ENCODE measurements at regions of chr20 and their contacts with region 1.

Region 1: GRCh38 chr20:52379723-52380336 is 188.3 kb upstream of the ZFP64 start:
- DNase-seq: peak; percentile 42
- ATAC-seq: no peak
- H3K4me3 Mint-ChIP-seq: no peak overlapping the region
- H3K27ac Mint-ChIP-seq: no peak overlapping the region
- H3K4me1 Mint-ChIP-seq: peaks cover 7% of the 10 kb centered on the region
- H3K27me3 Mint-ChIP-seq: no peaks in the 10 kb centered on the region
- CTCF ChIP-seq: peak; percentile 99

Region 2: DNA sequence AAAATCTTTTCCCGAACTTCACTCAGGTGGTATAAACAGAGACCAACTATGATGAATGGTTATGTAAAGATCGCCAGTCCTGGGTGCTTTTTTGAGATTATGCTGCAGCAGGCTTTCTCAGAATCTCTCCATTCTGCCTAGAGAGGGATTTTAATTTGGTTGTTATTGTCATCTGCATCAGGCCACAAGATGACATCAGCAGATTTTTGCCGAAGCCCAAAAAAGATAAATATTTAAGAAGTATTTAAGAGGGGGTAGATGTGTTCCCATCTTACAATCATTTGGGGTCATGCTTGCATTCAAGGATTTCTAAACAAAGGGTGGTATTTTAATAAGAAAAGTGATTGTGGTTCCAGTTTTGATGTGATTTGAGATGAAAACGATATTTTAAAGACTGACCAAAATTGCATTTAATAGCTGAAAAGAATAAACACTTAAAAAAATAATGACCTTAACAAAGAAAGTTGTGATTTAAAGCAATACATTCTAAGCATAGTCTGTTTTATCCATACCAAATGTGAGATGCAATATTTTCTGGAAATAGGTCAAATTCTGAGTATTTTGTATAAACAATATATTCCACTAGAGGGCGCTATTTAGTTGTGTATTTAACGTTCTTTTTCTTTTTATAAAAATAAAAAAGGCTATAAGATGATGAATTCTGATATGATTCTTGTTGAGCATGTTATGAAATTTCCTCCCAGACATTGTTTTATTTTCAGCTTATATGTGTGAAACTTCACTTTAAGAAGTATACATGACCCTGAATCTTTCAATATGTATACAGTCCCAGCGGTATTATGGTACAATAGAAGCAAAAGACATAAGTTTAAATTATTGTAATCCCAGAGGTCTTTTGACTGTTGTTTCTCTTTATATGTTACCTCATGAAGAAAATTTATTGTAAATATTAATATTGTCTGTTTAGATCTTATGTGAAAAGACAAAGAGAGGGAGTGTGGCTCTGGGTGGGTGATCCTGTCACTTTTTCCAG is 137.3 kb before region 1 on chr20:
- CTCF ChIA-PET with region 1: interaction called, 3 read pairs
- POLR2A ChIA-PET with region 1: no interaction called
- intact Hi-C with region 1: loop called (anchors 10 kb)
- DNase-seq: no peak
- ATAC-seq: no peak
- H3K4me3 Mint-ChIP-seq: no peak overlapping the region
- H3K27ac Mint-ChIP-seq: no peak overlapping the region
- H3K4me1 Mint-ChIP-seq: no peaks in the 10 kb centered on the region
- H3K27me3 Mint-ChIP-seq: no peaks in the 10 kb centered on the region
- CTCF ChIP-seq: peak; percentile 66

Region 3: GRCh38 chr20:52457826-52458225 is 78.0 kb after region 1 on chr20:
- CTCF ChIA-PET with region 1: no interaction called
- POLR2A ChIA-PET with region 1: no interaction called
- intact Hi-C with region 1: no loop called
- DNase-seq: no peak
- ATAC-seq: no peak
- H3K4me3 Mint-ChIP-seq: no peak overlapping the region
- H3K27ac Mint-ChIP-seq: no peak overlapping the region
- H3K4me1 Mint-ChIP-seq: no peaks in the 10 kb centered on the region
- H3K27me3 Mint-ChIP-seq: peaks cover 4% of the 10 kb centered on the region
- CTCF ChIP-seq: no peak